PC-9 (cell line): ENCODE measurements at regions of chr17 and their contacts with region 1.

Region 1: GRCh38 chr17:7687908-7688807 is at the start of gene WRAP53:
- DNase-seq: peak; percentile 93 to 99
- H3K4me3 ChIP-seq: peak within 1 kb of the TSS; percentile 99
- H3K27ac ChIP-seq: peak within 1 kb of the TSS; percentile 96
- H3K4me1 ChIP-seq: peaks cover 10% of the 10 kb centered on the region
- H3K27me3 ChIP-seq: no peaks in the 10 kb centered on the region
- CTCF ChIP-seq: peak; percentile 90
- total RNA-seq, gene WRAP53: 31.9 and 37.2 TPM in 2 replicates

Region 2: DNA sequence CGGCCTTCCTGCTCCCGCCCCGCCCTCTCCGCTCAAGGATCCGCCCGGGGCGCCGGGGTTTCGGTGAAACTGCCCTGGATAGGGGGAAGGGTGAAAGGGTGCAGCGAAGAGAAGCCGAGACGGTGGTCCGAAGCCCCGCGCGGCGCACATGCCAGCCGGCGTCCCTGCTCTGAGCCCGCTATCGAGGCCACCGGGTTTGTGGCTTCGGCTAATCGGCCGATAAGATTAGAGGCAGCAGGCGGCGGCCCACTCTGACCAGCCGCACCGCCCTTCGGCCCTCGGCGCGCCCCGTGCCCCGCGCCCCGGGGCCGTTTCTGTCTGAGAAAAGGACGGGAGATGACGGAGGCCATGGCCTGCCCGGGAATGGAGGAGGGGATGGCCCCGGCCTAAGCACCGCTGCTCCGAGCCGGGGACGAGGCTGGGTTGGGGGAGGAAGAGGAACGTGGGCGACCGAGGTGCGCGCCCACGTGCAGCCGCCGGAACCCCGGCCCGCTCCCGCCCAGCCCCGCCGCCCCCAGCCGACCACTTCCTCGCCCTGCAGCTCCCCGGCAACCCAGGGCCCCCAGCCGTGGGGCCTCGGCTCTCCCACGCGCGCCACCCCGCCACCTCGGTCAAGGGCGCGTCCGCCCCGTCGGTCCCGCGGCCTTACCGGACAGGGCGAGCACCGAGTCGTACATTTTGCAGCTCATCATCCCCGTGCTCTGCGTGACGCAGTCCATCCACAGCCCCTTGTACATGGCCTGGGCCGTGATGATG is 426.8 kb before region 1 on chr17:
- CTCF ChIA-PET with region 1: no interaction called
- POLR2A ChIA-PET with region 1: no interaction called
- intact Hi-C with region 1: loop called (anchors 5 kb)
- DNase-seq: peak; percentile 74 to 91
- H3K4me3 ChIP-seq: peak overlapping the region; percentile 97
- H3K27ac ChIP-seq: peak overlapping the region; percentile 100
- H3K4me1 ChIP-seq: peaks cover 40% of the 10 kb centered on the region
- H3K27me3 ChIP-seq: no peaks in the 10 kb centered on the region
- CTCF ChIP-seq: no peak; the same call in 1 of the 2 replicates

Region 3: DNA sequence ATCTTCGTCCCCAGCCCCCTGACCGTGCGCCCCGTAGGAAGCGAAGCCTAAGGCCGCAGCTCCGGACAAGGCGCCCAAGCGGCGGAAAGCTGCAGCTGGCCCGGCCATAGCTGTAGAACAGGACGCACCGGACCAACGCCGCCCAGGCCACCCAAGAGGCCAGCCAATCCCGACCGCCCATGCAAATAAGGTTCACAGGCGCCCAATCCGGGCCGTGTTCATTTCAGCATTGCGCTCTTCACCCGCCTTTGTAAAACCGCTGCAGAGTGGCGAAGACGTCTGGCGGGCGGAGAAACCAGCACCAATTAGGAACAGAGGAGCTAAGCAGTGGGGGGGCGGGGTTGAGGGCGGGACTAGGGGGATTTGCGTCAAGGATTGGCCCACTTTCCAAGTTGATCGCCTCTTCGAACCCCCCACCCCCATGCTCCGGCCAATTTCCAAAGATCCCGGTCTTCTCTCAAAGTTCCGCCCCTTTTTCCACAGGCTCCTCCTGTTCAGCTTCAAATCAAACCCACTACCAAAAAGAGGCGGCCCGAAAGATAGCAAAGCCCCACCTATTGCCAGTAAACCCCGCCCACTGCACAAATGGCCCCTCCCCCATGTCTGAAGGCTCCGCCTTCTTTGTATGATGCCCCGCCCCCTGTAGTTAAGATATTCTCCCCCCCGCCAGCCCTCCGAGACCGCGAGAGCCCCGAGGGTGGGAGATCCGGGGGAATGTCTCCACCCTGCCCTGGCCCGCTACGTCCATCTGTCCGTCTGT is 284.0 kb before region 1 on chr17 and contains the start of gene TMEM256:
- CTCF ChIA-PET with region 1: interaction called, 7 read pairs
- POLR2A ChIA-PET with region 1: interaction called, 19 read pairs
- intact Hi-C with region 1: loop called (anchors 5 kb)
- DNase-seq: peak; percentile 96 to 99
- H3K4me3 ChIP-seq: peak within 1 kb of the TSS; percentile 76
- H3K27ac ChIP-seq: peak within 1 kb of the TSS; percentile 51; the same call in 1 of the 2 replicates
- H3K4me1 ChIP-seq: peaks cover 15% of the 10 kb centered on the region
- H3K27me3 ChIP-seq: no peaks in the 10 kb centered on the region
- CTCF ChIP-seq: no peak
- total RNA-seq, gene TMEM256: 55.4 and 91.7 TPM in 2 replicates

Region 4: DNA sequence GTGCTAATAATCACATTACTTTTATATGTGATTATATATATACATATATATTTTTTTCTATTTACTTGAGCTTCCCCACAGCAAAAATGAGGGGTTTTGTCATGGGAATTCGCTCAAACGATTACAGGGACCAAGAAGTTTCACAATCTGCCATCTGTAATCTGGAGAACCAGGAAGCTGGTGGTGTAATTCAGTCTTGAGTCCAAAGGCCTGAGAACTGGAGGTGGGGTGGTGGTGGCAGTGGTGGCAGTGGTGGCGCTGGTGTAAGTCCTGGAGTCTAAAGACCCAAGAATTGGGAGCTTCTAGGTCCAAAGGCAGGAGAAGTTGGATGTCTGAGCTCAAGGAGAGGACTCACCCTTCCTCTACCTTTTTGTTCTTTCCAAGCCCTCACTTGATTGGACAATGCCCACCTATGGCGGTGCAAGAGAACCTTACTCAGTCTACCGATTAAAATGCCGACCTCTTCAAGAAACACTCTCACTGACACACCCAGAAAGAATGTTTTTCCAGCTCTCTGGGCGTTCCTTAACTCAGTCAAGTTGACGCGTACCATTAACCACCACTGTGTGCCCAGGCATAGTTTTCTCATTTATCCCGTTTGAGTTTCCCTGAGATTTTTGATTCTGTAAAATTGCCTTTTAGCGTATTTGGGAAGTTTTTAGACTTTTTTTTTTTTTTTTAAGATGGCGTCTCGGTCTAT is 172.1 kb before region 1 on chr17:
- CTCF ChIA-PET with region 1: no interaction called
- POLR2A ChIA-PET with region 1: no interaction called
- intact Hi-C with region 1: loop called (anchors 5 kb)
- DNase-seq: no peak
- H3K4me3 ChIP-seq: no peak overlapping the region
- H3K27ac ChIP-seq: no peak overlapping the region
- H3K4me1 ChIP-seq: no peaks in the 10 kb centered on the region
- H3K27me3 ChIP-seq: no peaks in the 10 kb centered on the region
- CTCF ChIP-seq: no peak

Region 5: GRCh38 chr17:7583253-7584109 is 104.7 kb before region 1 on chr17 and contains the start of gene MPDU1:
- CTCF ChIA-PET with region 1: interaction called, 8 read pairs
- POLR2A ChIA-PET with region 1: interaction called, 14 read pairs
- intact Hi-C with region 1: loop called (anchors 1 kb)
- DNase-seq: peak; percentile 72 to 97
- H3K4me3 ChIP-seq: peak within 1 kb of the TSS; percentile 65
- H3K27ac ChIP-seq: peak within 1 kb of the TSS; percentile 87
- H3K4me1 ChIP-seq: peaks cover 41% of the 10 kb centered on the region
- H3K27me3 ChIP-seq: no peaks in the 10 kb centered on the region
- CTCF ChIP-seq: no peak
- total RNA-seq, gene MPDU1: 33.4 and 44.2 TPM in 2 replicates

Region 6: DNA sequence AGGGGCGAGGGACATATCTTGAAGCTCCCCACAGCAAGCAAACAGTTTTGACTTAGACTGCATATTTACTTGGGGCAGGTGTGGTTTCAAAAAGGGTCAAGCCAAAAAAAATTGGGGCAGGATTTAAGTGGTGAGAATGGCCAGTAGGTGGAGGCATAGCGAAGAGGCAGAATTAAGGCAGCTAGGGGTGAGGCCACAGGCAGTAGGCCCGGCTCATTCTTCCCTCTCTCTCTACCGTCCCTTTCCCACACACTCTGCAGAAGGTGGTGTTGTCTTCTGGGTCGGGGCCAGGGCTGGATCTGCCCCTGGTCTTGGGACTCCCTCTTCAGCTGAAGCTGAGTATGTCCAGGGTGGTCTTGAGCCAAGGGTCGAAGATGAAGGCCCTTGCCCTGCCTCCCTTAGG is 55.7 kb before region 1 on chr17:
- CTCF ChIA-PET with region 1: interaction called, 8 read pairs
- POLR2A ChIA-PET with region 1: interaction called, 8 read pairs
- intact Hi-C with region 1: loop called (anchors 5 kb)
- DNase-seq: peak in 1 of 2 experiments; percentile 38
- H3K4me3 ChIP-seq: no peak overlapping the region
- H3K27ac ChIP-seq: no peak overlapping the region
- H3K4me1 ChIP-seq: no peaks in the 10 kb centered on the region
- H3K27me3 ChIP-seq: no peaks in the 10 kb centered on the region
- CTCF ChIP-seq: peak; percentile 54; the same call in 1 of the 2 replicates